Calu3 (cell line): ENCODE measurements at regions of chr12 and their contacts with region 1.

Region 1: GRCh38 chr12:88737838-88738472 is 157.7 kb upstream of the KITLG start:
- DNase-seq: peak; percentile 24
- H3K4me3 Mint-ChIP-seq: peak overlapping the region; percentile 2
- H3K27ac Mint-ChIP-seq: peak overlapping the region; percentile 74
- H3K4me1 Mint-ChIP-seq: peaks cover 39% of the 10 kb centered on the region
- H3K27me3 Mint-ChIP-seq: no peaks in the 10 kb centered on the region
- CTCF ChIP-seq: no peak

Region 2: GRCh38 chr12:88638966-88639760 is 98.8 kb before region 1 on chr12:
- CTCF ChIA-PET with region 1: no interaction called
- intact Hi-C with region 1: loop called (anchors 5 kb)
- DNase-seq: no peak
- H3K4me3 Mint-ChIP-seq: no peak overlapping the region
- H3K27ac Mint-ChIP-seq: no peak overlapping the region
- H3K4me1 Mint-ChIP-seq: peaks cover 6% of the 10 kb centered on the region
- H3K27me3 Mint-ChIP-seq: no peaks in the 10 kb centered on the region
- CTCF ChIP-seq: no peak

Region 3: DNA sequence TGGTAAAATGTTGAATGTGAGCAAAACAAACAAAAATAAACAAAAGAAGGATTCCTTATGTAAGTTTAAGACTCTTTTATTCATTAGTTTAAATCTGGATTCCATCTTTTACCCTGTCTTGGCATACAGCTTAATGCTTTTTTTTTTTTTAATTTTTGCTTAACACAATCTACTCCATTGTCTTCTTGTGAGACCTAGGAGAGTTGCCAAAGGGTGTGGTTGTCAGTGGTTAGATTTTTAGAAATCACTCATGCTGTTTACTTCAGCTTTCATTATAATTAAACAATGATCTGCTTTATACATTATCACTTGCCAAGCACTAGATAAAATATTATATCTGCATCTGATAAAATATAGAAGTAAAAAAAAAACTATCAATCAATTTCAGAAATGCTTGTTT is 79.9 kb before region 1 on chr12:
- CTCF ChIA-PET with region 1: no interaction called
- intact Hi-C with region 1: loop called (anchors 1 kb)
- DNase-seq: peak; percentile 60
- H3K4me3 Mint-ChIP-seq: no peak overlapping the region
- H3K27ac Mint-ChIP-seq: peak overlapping the region; percentile 47
- H3K4me1 Mint-ChIP-seq: peaks cover 9% of the 10 kb centered on the region
- H3K27me3 Mint-ChIP-seq: no peaks in the 10 kb centered on the region
- CTCF ChIP-seq: no peak

Region 4: GRCh38 chr12:88854260-88854659 is 116.3 kb after region 1 on chr12:
- CTCF ChIA-PET with region 1: no interaction called
- intact Hi-C with region 1: loop called (anchors 5 kb)
- DNase-seq: peak; percentile 22
- H3K4me3 Mint-ChIP-seq: peak overlapping the region; percentile 8
- H3K27ac Mint-ChIP-seq: peak overlapping the region; percentile 79
- H3K4me1 Mint-ChIP-seq: peaks cover 32% of the 10 kb centered on the region
- H3K27me3 Mint-ChIP-seq: no peaks in the 10 kb centered on the region
- CTCF ChIP-seq: no peak

Region 5: DNA sequence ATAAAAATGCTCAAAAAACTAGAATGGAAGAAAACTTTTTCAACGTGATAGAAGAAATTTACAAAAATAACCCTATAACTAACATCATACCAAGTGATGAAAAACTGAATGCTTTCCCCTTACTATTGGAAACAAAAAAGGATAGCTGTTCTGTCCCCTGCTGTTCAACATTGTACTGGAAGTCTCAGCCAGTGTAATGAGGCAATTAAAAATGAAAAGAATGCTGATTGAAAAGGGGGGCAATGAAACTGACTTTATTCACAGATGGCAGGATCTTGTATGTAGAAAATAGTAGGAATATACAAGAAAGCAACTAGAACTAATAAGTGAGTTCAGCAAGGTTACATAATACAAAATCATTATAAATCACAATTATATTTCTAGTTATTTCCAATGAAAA is 180.2 kb after region 1 on chr12:
- CTCF ChIA-PET with region 1: no interaction called
- intact Hi-C with region 1: no loop called
- DNase-seq: no peak
- H3K4me3 Mint-ChIP-seq: no peak overlapping the region
- H3K27ac Mint-ChIP-seq: no peak overlapping the region
- H3K4me1 Mint-ChIP-seq: peaks cover 20% of the 10 kb centered on the region
- H3K27me3 Mint-ChIP-seq: no peaks in the 10 kb centered on the region
- CTCF ChIP-seq: no peak

Region 6: GRCh38 chr12:88934163-88934747 is 196.3 kb after region 1 on chr12:
- CTCF ChIA-PET with region 1: interaction called, 3 read pairs
- intact Hi-C with region 1: loop called (anchors 5 kb)
- DNase-seq: peak; percentile 16
- H3K4me3 Mint-ChIP-seq: peak overlapping the region; percentile 8
- H3K27ac Mint-ChIP-seq: peak overlapping the region; percentile 71
- H3K4me1 Mint-ChIP-seq: peaks cover 57% of the 10 kb centered on the region
- H3K27me3 Mint-ChIP-seq: no peaks in the 10 kb centered on the region
- CTCF ChIP-seq: no peak